ENCODE measurements at regions of chr14 and their contacts with region 1.

Region 1: DNA sequence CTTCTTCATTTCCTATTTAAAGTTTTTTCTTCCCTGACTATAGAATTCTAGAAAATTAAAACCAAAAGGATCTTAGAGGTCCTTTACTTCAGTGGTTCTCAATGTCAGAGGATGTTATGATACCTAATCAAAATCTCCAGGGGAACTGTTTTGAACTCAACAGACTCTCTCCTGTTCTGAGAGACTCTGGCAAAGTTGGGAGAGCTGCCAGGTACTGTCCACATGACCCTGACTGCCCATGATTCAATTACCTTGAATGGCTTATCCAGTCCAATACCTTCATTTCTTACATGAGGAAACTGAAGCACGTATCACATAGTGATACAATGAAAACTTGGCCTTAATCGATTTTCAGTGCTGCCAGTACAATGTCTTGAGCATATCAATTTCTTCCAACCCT is 16.6 kb downstream of the ALKBH1 start:
- DNase-seq: no peak
- H3K4me3 ChIP-seq: no peak overlapping the region
- CTCF ChIP-seq: no peak

Region 2: GRCh38 chr14:77278461-77279230 is 412.6 kb before region 1 on chr14:
- in situ Hi-C with region 1: no loop called
- DNase-seq: no peak
- H3K4me3 ChIP-seq: no peak overlapping the region
- CTCF ChIP-seq: no peak

Region 3: GRCh38 chr14:77607741-77608302 is 83.4 kb before region 1 on chr14:
- in situ Hi-C with region 1: loop called (anchors 5 kb)
- DNase-seq: no peak
- H3K4me3 ChIP-seq: no peak overlapping the region
- CTCF ChIP-seq: no peak

Region 4: GRCh38 chr14:77641534-77642341 is 49.5 kb before region 1 on chr14:
- in situ Hi-C with region 1: no loop called
- DNase-seq: no peak
- H3K4me3 ChIP-seq: peak overlapping the region; percentile 20
- CTCF ChIP-seq: no peak

Measured in astrocyte of the cerebellum (primary cell).